ENCODE measurements at regions of chr12 and their contacts with region 1.

Region 1: GRCh38 chr12:6688999-6689882 is at the start of gene ZNF384:
- DNase-seq: peak; percentile 90 to 99 (median 94)
- ATAC-seq: peak; percentile 79
- H3K4me3 ChIP-seq: peak within 1 kb of the TSS; percentile 88
- H3K4me3 Mint-ChIP-seq: peak within 1 kb of the TSS; percentile 89
- H3K27ac ChIP-seq: peak within 1 kb of the TSS; percentile 92 to 94
- H3K27ac Mint-ChIP-seq: peak within 1 kb of the TSS; percentile 93
- H3K4me1 ChIP-seq: peaks cover 51% of the 10 kb centered on the region
- H3K4me1 Mint-ChIP-seq: peaks cover 51% of the 10 kb centered on the region
- H3K27me3 ChIP-seq: no peaks in the 10 kb centered on the region
- H3K27me3 Mint-ChIP-seq: no peaks in the 10 kb centered on the region
- CTCF ChIP-seq: peak; percentile 30
- total RNA-seq, gene ZNF384: 67.6 TPM

Region 2: GRCh38 chr12:6607751-6608591 is 81.3 kb before region 1 on chr12:
- CTCF ChIA-PET with region 1: interaction called, 6 read pairs
- POLR2A ChIA-PET with region 1: interaction called, 15 read pairs
- intact Hi-C with region 1: loop called in 1 of 2 experiments (anchors 2 kb)
- DNase-seq: peak in 12 of 14 experiments; percentile 24 to 89 (median 51)
- ATAC-seq: peak; percentile 59
- H3K4me3 ChIP-seq: no peak overlapping the region
- H3K4me3 Mint-ChIP-seq: no peak overlapping the region
- H3K27ac ChIP-seq: peak overlapping the region; percentile 63 to 94
- H3K27ac Mint-ChIP-seq: no peak overlapping the region
- H3K4me1 ChIP-seq: peaks cover 71% of the 10 kb centered on the region
- H3K4me1 Mint-ChIP-seq: peaks cover 54% of the 10 kb centered on the region
- H3K27me3 ChIP-seq: no peaks in the 10 kb centered on the region
- H3K27me3 Mint-ChIP-seq: no peaks in the 10 kb centered on the region
- CTCF ChIP-seq: no peak

Region 3: GRCh38 chr12:6632026-6632983 is 56.9 kb before region 1 on chr12:
- CTCF ChIA-PET with region 1: interaction called, 4 read pairs
- POLR2A ChIA-PET with region 1: interaction called, 15 read pairs
- intact Hi-C with region 1: no loop called
- DNase-seq: peak in 13 of 14 experiments; percentile 29 to 84 (median 47)
- ATAC-seq: peak; percentile 81
- H3K4me3 ChIP-seq: peak overlapping the region; percentile 51
- H3K4me3 Mint-ChIP-seq: peak overlapping the region; percentile 78
- H3K27ac ChIP-seq: peak overlapping the region; percentile 66 to 67
- H3K27ac Mint-ChIP-seq: peak overlapping the region; percentile 91
- H3K4me1 ChIP-seq: peaks cover 70% of the 10 kb centered on the region
- H3K4me1 Mint-ChIP-seq: peaks cover 63% of the 10 kb centered on the region
- H3K27me3 ChIP-seq: no peaks in the 10 kb centered on the region
- H3K27me3 Mint-ChIP-seq: no peaks in the 10 kb centered on the region
- CTCF ChIP-seq: no peak

Region 4: GRCh38 chr12:6723607-6724396 is 34.6 kb after region 1 on chr12 and contains the start of gene COPS7A:
- CTCF ChIA-PET with region 1: interaction called, 15 read pairs
- POLR2A ChIA-PET with region 1: interaction called, 164 read pairs
- intact Hi-C with region 1: loop called (anchors 1 kb)
- DNase-seq: peak; percentile 81 to 99 (median 93)
- ATAC-seq: peak; percentile 84
- H3K4me3 ChIP-seq: peak within 1 kb of the TSS; percentile 59
- H3K4me3 Mint-ChIP-seq: peak within 1 kb of the TSS; percentile 87
- H3K27ac ChIP-seq: peak within 1 kb of the TSS; percentile 68 to 88
- H3K27ac Mint-ChIP-seq: peak within 1 kb of the TSS; percentile 83
- H3K4me1 ChIP-seq: peaks cover 18% of the 10 kb centered on the region
- H3K4me1 Mint-ChIP-seq: peaks cover 28% of the 10 kb centered on the region
- H3K27me3 ChIP-seq: no peaks in the 10 kb centered on the region
- H3K27me3 Mint-ChIP-seq: no peaks in the 10 kb centered on the region
- CTCF ChIP-seq: no peak
- total RNA-seq, gene COPS7A: 9.4 to 9.6 TPM

Region 5: GRCh38 chr12:6825398-6826124 is 136.3 kb after region 1 on chr12:
- CTCF ChIA-PET with region 1: no interaction called
- POLR2A ChIA-PET with region 1: interaction called, 10 read pairs
- intact Hi-C with region 1: no loop called
- DNase-seq: peak; percentile 71 to 90 (median 80)
- ATAC-seq: peak; percentile 65
- H3K4me3 ChIP-seq: no peak overlapping the region
- H3K4me3 Mint-ChIP-seq: peak overlapping the region; percentile 5
- H3K27ac ChIP-seq: no peak overlapping the region
- H3K27ac Mint-ChIP-seq: no peak overlapping the region
- H3K4me1 ChIP-seq: peaks cover 51% of the 10 kb centered on the region
- H3K4me1 Mint-ChIP-seq: peaks cover 26% of the 10 kb centered on the region
- H3K27me3 ChIP-seq: peaks cover 19 to 29% of the 10 kb centered on the region in 2 experiments
- H3K27me3 Mint-ChIP-seq: peaks cover 32% of the 10 kb centered on the region
- CTCF ChIP-seq: peak; percentile 94

Region 6: DNA sequence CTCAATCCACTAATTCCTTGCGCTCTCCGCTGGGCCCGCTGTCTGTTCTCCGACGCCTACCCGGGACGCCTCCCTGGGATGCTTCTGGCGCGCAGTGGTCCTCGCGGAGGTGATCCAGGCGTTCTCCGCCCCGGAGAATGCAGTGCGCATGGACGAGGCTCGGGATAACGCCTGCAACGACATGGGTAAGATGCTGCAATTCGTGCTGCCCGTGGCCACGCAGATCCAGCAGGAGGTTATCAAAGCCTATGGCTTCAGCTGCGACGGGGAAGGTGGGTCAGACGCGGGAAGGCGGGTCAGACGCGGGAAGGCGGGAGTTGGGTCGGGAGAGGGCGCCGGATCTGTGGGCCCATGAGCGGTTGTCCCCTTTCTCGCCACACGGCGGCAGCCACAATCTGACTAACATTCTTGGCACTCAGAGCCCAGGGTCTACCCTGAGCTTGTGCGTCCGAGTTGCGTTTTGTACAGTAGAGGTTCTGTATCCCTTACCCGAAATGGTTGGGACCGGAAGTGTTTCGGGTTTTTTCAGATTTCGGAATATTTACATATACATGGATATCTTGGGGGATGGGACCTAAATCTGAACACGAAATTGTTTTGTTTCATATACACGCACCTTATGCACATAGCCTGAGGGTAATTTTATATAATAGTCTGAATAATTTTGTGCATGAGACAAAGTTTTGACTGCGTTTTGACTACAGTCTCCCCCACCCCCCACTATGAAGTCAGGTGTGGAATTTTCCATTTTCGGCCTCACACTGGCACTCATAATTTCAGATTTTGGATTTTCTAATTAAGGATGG is 255.3 kb after region 1 on chr12:
- CTCF ChIA-PET with region 1: no interaction called
- POLR2A ChIA-PET with region 1: interaction called, 24 read pairs
- intact Hi-C with region 1: no loop called
- DNase-seq: peak; percentile 75 to 94 (median 84)
- ATAC-seq: peak; percentile 51
- H3K4me3 ChIP-seq: peak overlapping the region; percentile 65
- H3K4me3 Mint-ChIP-seq: peak overlapping the region; percentile 97
- H3K27ac ChIP-seq: peak overlapping the region; percentile 96 to 98
- H3K27ac Mint-ChIP-seq: peak overlapping the region; percentile 97
- H3K4me1 ChIP-seq: peaks cover 74% of the 10 kb centered on the region
- H3K4me1 Mint-ChIP-seq: peaks cover 73% of the 10 kb centered on the region
- H3K27me3 ChIP-seq: no peaks in the 10 kb centered on the region
- H3K27me3 Mint-ChIP-seq: no peaks in the 10 kb centered on the region
- CTCF ChIP-seq: peak; percentile 92